Adrenal gland (tissue), 19 donors: ENCODE measurements at regions of chr5 and their contacts with region 1.

Region 1: DNA sequence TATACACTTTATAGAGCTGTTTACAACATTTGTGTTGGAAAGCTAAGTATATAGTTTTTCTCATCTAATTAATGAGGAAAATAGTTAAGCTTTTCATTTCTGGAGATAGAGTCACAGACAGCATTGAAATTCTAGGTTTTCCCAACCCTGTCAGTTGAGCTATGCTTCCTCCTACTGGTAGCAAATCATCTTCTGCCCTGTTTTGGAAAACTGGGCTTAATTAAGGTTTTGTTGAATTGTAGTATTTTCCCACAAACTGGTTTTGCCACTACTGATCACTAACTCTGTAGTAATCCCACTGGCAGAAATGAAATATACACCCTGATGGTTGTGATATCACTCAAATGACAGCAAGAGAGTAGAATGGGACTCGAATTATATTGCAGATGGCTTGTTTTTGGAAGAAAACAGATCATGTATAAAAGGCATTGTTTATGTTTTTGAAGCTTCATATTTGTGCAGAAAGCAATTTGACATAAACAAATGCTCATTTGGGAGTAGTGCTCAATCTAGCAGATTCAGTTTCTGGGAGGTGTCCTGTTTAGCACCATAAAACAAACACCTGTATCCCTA is 46.6 kb downstream of the CD180 start:
- DNase-seq: no peak
- H3K4me3 ChIP-seq: no peak overlapping the region
- H3K27ac ChIP-seq: no peak overlapping the region
- H3K4me1 ChIP-seq: no peaks in the 10 kb centered on the region
- H3K27me3 ChIP-seq: no peaks in the 10 kb centered on the region
- CTCF ChIP-seq: peak in 4 of 6 experiments; percentile 33 to 52 (median 42)
- POLR2A ChIP-seq: no peak

Region 2: GRCh38 chr5:66987949-66988838 is 161.8 kb before region 1 on chr5:
- intact Hi-C with region 1: loop called in 1 of 2 experiments (anchors 5 kb)
- DNase-seq: no peak
- H3K4me3 ChIP-seq: no peak overlapping the region
- H3K27ac ChIP-seq: no peak overlapping the region
- H3K4me1 ChIP-seq: no peaks in the 10 kb centered on the region
- H3K27me3 ChIP-seq: no peaks in the 10 kb centered on the region
- CTCF ChIP-seq: peak; percentile 71 to 88 (median 82)
- POLR2A ChIP-seq: no peak

Region 3: DNA sequence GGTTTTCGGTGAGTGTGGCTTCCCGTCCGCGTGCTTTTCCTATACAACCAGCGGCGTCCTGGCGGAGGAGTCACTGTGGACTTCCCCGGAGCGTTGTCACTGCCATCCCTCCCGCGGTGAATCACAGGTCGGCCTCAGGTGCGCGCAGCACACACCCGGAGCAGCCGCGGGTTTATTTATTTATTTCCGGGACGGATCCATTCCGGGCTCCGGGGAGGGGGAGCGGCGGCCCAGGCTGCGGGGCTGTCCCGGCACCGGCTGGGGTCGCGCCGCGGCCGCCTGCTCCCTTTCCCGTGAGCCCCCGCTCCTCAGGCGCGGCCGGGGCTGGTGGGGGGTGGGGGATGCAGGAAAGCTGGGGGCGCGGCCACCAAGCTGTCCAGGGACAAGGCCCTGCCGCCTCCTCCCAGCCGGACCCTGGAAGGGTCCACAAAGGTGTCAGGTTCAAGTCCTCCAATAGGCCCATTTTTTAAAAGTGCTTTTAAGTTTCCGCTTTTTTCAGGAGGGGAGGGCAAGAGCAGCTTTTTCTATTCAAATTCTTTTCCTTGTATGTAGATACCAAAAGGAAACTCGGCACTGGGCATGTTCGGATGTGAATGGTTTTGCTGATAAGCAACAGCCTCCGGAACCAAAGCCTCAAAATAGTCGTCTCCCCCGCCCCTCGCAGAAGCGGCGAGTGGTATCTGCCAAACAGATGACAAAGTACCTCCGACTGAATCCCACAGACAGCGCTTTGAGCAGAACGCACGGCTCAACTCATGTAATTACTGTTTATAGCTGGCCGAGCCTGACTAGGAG is 145.9 kb before region 1 on chr5:
- intact Hi-C with region 1: loop called in 1 of 2 experiments (anchors 10 kb)
- DNase-seq: peak; percentile 85 to 96 (median 91)
- H3K4me3 ChIP-seq: peak overlapping the region; percentile 25 to 72 (median 54)
- H3K27ac ChIP-seq: peak overlapping the region; percentile 23 to 88 (median 84)
- H3K4me1 ChIP-seq: peaks cover 8 to 49% of the 10 kb centered on the region in 2 donors
- H3K27me3 ChIP-seq: no peaks in the 10 kb centered on the region
- CTCF ChIP-seq: no peak
- POLR2A ChIP-seq: peak; percentile 31 to 77

Region 4: DNA sequence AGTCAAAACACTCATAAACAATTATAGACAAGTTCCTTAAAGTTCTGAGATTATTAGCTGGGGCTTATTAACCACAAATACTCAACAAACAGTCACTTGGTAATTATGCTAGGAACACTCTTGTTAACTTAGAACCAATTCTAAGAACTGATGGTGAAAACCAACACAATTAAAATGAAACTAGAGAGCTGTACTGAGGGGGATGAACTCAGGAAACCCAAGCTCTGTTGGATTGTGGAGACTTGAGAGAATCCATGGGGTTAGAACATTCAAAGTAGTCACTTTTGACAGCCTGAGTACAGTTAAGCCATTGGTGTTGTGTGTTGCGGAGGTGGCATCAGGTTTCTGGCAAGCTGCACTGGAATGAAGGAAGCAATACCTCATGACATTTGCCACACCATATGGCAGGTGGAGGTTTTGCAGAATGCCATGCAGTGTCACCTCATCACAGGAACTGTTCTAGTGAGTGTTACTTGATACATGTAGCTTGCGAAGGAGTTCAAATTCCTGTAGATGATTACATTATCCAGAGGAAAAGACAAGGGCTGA is 527.5 kb after region 1 on chr5:
- intact Hi-C with region 1: no loop called
- DNase-seq: no peak
- H3K4me3 ChIP-seq: no peak overlapping the region
- H3K27ac ChIP-seq: no peak overlapping the region
- H3K4me1 ChIP-seq: no peaks in the 10 kb centered on the region
- H3K27me3 ChIP-seq: no peaks in the 10 kb centered on the region
- CTCF ChIP-seq: no peak
- POLR2A ChIP-seq: no peak